PC-3 (cell line): ENCODE measurements at regions of chr3 and their contacts with region 1.

Region 1: GRCh38 chr3:40179016-40179415 is 130.5 kb upstream of the EIF1B start:
- DNase-seq: peak; percentile 81
- ATAC-seq: peak; percentile 92
- H3K4me3 ChIP-seq: no peak overlapping the region
- H3K27ac ChIP-seq: no peak overlapping the region
- H3K4me1 ChIP-seq: no peaks in the 10 kb centered on the region
- H3K27me3 ChIP-seq: peaks cover 11% of the 10 kb centered on the region
- CTCF ChIP-seq: peak; percentile 80

Region 2: DNA sequence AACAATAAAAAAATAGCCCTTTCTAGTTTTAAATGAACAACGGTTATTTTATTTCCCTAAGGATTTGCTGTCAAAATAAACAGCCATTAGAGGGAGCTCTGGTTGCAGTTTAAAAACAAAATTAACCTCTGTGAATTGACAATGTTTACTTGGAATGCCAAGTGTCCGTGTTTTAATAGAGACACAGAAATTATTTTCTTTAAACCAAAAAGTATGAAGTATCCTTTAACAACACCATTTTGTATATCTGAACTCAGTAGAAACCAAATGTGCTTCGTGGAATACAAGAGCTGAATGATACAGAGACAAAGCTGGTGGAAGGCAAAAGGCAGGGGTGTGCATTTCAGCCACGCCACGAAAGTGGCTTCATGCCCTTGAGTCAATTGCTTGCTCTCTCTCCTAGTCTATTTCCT is 637.1 kb before region 1 on chr3:
- CTCF ChIA-PET with region 1: no interaction called
- POLR2A ChIA-PET with region 1: no interaction called
- intact Hi-C with region 1: loop called (anchors 1 kb)
- DNase-seq: peak; percentile 64
- ATAC-seq: peak; percentile 50
- H3K4me3 ChIP-seq: peak overlapping the region; percentile 36
- H3K27ac ChIP-seq: no peak overlapping the region
- H3K4me1 ChIP-seq: no peaks in the 10 kb centered on the region
- H3K27me3 ChIP-seq: no peaks in the 10 kb centered on the region
- CTCF ChIP-seq: peak; percentile 91